HepG2 (cell line): ENCODE measurements at regions of chr11 and their contacts with region 1.

Region 1: DNA sequence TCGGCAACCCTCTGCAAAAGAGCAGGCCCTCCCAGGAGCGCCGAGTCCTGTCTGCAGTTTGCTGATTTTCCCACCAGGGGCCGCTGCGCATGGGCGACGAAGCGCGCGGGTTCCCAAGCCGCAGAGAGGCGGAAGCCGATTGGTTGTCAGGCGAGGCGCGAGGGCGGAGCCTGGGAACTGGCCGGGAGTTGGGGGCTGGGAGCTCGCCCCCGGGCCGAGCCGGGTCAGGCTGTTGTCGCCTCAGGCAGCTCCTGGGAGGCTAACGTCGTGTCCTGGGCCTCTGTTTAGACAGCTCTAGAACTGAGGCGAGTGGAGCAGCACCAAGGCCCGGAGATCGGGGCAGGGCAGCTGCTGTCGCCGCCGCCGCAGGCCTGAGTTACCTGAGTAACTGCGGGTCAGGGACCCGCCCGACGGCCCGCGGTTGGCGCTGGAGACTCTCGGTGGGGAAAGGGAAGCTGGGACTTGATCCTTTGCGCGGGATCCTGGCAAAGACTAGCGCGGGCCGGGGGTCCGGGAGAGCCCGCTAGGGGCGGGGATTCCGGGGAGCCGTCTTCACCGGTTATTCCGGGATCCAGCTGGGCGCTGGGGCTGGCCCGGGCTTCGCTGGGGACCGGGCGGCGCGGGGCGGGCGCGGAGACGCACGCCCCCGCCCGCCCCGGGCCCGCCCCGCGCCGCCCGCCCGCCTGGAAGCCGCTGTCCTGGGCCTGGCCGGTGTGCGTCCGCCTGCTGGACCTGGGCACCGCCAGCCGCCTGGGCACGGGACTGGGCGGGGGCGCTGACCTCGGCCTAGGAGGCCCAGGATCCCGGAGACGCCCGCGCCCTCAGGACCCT is at the start of gene STIM1:
- DNase-seq: peak; percentile 84
- ATAC-seq: peak; percentile 88
- H3K4me3 ChIP-seq: peak within 1 kb of the TSS; percentile 83 to 96 (median 87)
- H3K27ac ChIP-seq: peak within 1 kb of the TSS; percentile 86
- H3K4me1 ChIP-seq: peaks cover 49% of the 10 kb centered on the region
- H3K27me3 ChIP-seq: no peaks in the 10 kb centered on the region; a peak in 1 of 5 replicates
- CTCF ChIP-seq: peak; percentile 98
- EP300 ChIP-seq: no peak
- POLR2A ChIP-seq: peak in 1 of 2 experiments; percentile 65; a peak in 3 of 4 replicates
- RAD21 ChIP-seq: peak; percentile 95
- total RNA-seq, gene STIM1: 16.3 and 19.2 TPM in 2 replicates

Region 2: GRCh38 chr11:3841426-3842350 is 13.5 kb before region 1 on chr11:
- CTCF ChIA-PET with region 1: no interaction called
- POLR2A ChIA-PET with region 1: interaction called, 42 read pairs
- in situ Hi-C with region 1: no loop called
- intact Hi-C with region 1: loop called (anchors 2 kb)
- DNase-seq: peak; percentile 79
- ATAC-seq: peak; percentile 84
- H3K4me3 ChIP-seq: peak overlapping the region; percentile 79 to 84 (median 83)
- H3K27ac ChIP-seq: peak overlapping the region; percentile 75
- H3K4me1 ChIP-seq: peaks cover 46% of the 10 kb centered on the region
- H3K27me3 ChIP-seq: no peaks in the 10 kb centered on the region; a peak in 1 of 5 replicates
- CTCF ChIP-seq: peak; percentile 91
- EP300 ChIP-seq: no peak
- POLR2A ChIP-seq: no peak
- RAD21 ChIP-seq: peak; percentile 63

Region 3: DNA sequence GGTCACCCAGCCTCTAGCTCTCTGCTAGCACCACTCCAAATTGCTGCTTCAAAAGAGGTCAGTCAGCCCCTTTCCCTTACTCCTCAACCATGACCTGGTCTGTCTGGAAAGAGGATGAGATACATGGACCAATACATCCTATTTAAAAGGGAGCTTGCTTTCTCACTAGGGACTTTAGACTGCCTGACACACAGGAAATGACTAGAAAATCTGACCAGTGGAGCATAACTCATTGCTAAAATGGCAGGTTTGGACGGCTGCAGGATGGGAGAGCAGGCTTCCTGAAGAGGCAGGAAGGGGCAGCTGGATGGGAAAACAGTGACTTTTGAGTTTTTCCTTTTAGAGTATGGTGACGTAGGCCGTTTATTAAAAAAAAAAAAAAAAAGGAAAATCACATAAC is 25.5 kb after region 1 on chr11:
- CTCF ChIA-PET with region 1: no interaction called
- POLR2A ChIA-PET with region 1: interaction called, 20 read pairs
- in situ Hi-C with region 1: no loop called
- intact Hi-C with region 1: loop called (anchors 1 kb)
- DNase-seq: peak; percentile 65
- ATAC-seq: peak; percentile 54
- H3K4me3 ChIP-seq: peak overlapping the region; percentile 41 to 49 (median 47); a peak in 5 of 6 replicates
- H3K27ac ChIP-seq: peak overlapping the region; percentile 78
- H3K4me1 ChIP-seq: peaks cover 59% of the 10 kb centered on the region
- H3K27me3 ChIP-seq: no peaks in the 10 kb centered on the region
- CTCF ChIP-seq: no peak
- EP300 ChIP-seq: no peak
- POLR2A ChIP-seq: no peak
- RAD21 ChIP-seq: no peak

Region 4: DNA sequence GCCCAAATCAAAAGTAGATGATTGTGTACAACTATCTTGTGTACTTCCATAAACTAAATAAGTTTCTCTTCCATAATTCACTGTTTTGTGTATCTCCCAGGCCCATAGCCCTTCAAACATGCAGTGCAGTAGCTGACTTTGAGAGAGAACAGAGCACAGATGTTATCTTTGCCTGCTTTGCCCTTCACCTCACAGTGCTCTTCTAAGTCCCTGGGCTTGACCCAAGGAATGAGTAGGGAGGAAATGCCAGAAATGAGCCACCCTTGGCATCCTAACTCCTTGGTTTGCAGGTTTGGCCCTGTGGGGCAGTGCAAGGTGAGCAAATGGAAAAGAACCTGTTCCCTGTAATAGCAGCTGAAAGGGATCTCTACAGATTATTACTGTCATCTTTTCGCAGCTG is 79.5 kb after region 1 on chr11:
- CTCF ChIA-PET with region 1: no interaction called
- POLR2A ChIA-PET with region 1: interaction called, 14 read pairs
- in situ Hi-C with region 1: no loop called
- intact Hi-C with region 1: no loop called
- DNase-seq: no peak
- ATAC-seq: no peak
- H3K4me3 ChIP-seq: no peak overlapping the region
- H3K27ac ChIP-seq: peak overlapping the region; percentile 76
- H3K4me1 ChIP-seq: peaks cover 60% of the 10 kb centered on the region
- H3K27me3 ChIP-seq: no peaks in the 10 kb centered on the region
- CTCF ChIP-seq: no peak
- EP300 ChIP-seq: no peak
- POLR2A ChIP-seq: no peak
- RAD21 ChIP-seq: no peak

Region 5: DNA sequence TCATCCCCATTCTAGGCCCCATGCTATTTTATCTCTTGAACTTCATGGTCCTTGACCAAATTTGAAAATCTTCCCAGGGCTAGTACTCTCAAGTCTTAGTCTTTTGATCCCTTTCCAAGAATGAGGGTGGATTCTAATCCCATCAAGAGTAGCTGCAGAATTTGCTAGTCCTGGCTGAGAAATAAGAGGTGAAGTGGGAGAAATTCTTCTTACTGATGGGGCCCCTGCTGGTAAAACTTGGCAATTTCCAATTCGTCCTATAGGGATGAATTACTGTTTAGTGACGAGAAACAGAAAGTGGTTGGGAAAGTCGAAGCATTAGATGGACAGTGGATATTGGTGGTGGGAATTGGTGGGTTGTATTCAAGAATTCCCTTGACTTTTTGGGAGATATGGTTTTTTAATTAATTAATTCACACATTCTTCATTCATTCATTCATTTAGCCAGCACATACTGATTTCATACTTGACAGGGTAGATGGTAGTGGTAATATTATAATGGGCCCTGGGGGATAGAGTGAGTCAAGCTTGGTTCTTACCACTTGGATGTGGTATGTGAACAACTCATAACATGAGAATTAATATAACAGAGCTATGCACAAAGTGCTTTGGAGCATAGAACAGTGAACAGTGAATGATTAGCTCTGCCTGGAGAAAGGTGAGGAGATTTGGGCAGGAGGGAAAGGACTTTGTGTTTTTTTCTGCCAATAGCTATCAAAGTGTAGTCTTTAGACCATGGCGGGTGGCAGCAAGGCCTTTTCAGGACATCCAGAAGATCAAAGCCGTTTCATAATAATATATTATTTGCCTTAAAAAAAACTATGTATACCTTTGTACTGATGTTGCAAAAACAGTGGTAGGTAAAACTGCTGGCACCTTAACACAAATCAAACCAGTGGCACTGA is 104.1 kb after region 1 on chr11:
- CTCF ChIA-PET with region 1: no interaction called
- POLR2A ChIA-PET with region 1: interaction called, 15 read pairs
- in situ Hi-C with region 1: loop called (anchors 10 kb)
- intact Hi-C with region 1: loop called (anchors 2 kb)
- DNase-seq: peak; percentile 86
- ATAC-seq: peak; percentile 93
- H3K4me3 ChIP-seq: peak overlapping the region in 1 of 3 experiments; percentile 13; a peak in 1 of 6 replicates
- H3K27ac ChIP-seq: peak overlapping the region; percentile 46
- H3K4me1 ChIP-seq: peaks cover 66% of the 10 kb centered on the region
- H3K27me3 ChIP-seq: no peaks in the 10 kb centered on the region
- CTCF ChIP-seq: no peak; the same call in 1 of the 2 replicates
- EP300 ChIP-seq: peak in 1 of 2 experiments; percentile 59; a peak in 1 of 4 replicates
- POLR2A ChIP-seq: no peak
- RAD21 ChIP-seq: no peak

Region 6: GRCh38 chr11:4072668-4073285 is 217.6 kb after region 1 on chr11:
- CTCF ChIA-PET with region 1: interaction called, 30 read pairs
- POLR2A ChIA-PET with region 1: interaction called, 15 read pairs
- in situ Hi-C with region 1: no loop called
- intact Hi-C with region 1: loop called (anchors 1 kb)
- DNase-seq: peak; percentile 72
- ATAC-seq: peak; percentile 79
- H3K4me3 ChIP-seq: no peak overlapping the region
- H3K27ac ChIP-seq: no peak overlapping the region
- H3K4me1 ChIP-seq: no peaks in the 10 kb centered on the region
- H3K27me3 ChIP-seq: no peaks in the 10 kb centered on the region
- CTCF ChIP-seq: peak; percentile 88
- EP300 ChIP-seq: no peak
- POLR2A ChIP-seq: no peak
- RAD21 ChIP-seq: peak; percentile 88